T-cell (primary cell): ENCODE measurements at regions of chr11 and their contacts with region 1.

Region 1: GRCh38 chr11:57493507-57494503 is 21.7 kb downstream of the SLC43A1 start:
- DNase-seq: peak; percentile 34 to 80 (median 64)
- ATAC-seq: peak; percentile 89 to 92 (median 91)
- H3K4me3 ChIP-seq: no peak overlapping the region
- H3K4me3 Mint-ChIP-seq: no peak overlapping the region
- H3K27ac ChIP-seq: no peak overlapping the region
- H3K27ac Mint-ChIP-seq: peak overlapping the region; percentile 19 to 39
- H3K4me1 ChIP-seq: peaks cover 0 to 3% of the 10 kb centered on the region in 2 experiments
- H3K4me1 Mint-ChIP-seq: peaks cover 0 to 3% (median 0%) of the 10 kb centered on the region in 3 donors
- H3K27me3 ChIP-seq: peaks cover 0 to 7% of the 10 kb centered on the region in 2 experiments
- H3K27me3 Mint-ChIP-seq: no peaks in the 10 kb centered on the region

Region 2: GRCh38 chr11:57482782-57483561 is 10.8 kb before region 1 on chr11:
- CTCF ChIA-PET with region 1: interaction called, 14 read pairs
- POLR2A ChIA-PET with region 1: interaction called in 1 of 2 experiments, 3 read pairs
- DNase-seq: peak in 33 of 35 experiments; percentile 23 to 78 (median 53)
- ATAC-seq: peak; percentile 64 to 92 (median 74)
- H3K4me3 ChIP-seq: peak overlapping the region; percentile 21 to 39
- H3K4me3 Mint-ChIP-seq: peak overlapping the region in 2 of 3 donors; percentile 28 to 47
- H3K27ac ChIP-seq: no peak overlapping the region
- H3K27ac Mint-ChIP-seq: no peak overlapping the region
- H3K4me1 ChIP-seq: peaks cover 2 to 20% of the 10 kb centered on the region in 2 experiments
- H3K4me1 Mint-ChIP-seq: peaks cover 5 to 17% (median 12%) of the 10 kb centered on the region in 3 donors
- H3K27me3 ChIP-seq: peaks cover 0 to 45% of the 10 kb centered on the region in 2 experiments
- H3K27me3 Mint-ChIP-seq: peaks cover 12 to 30% of the 10 kb centered on the region in 2 donors

Region 3: GRCh38 chr11:57508341-57509170 is 14.8 kb after region 1 on chr11:
- CTCF ChIA-PET with region 1: interaction called, 17 to 27 read pairs
- POLR2A ChIA-PET with region 1: no interaction called
- DNase-seq: no peak
- ATAC-seq: no peak
- H3K4me3 ChIP-seq: no peak overlapping the region
- H3K4me3 Mint-ChIP-seq: no peak overlapping the region
- H3K27ac ChIP-seq: no peak overlapping the region
- H3K27ac Mint-ChIP-seq: no peak overlapping the region
- H3K4me1 ChIP-seq: peaks cover 0 to 6% of the 10 kb centered on the region in 2 experiments
- H3K4me1 Mint-ChIP-seq: peaks cover 18 to 27% (median 25%) of the 10 kb centered on the region in 3 donors
- H3K27me3 ChIP-seq: no peaks in the 10 kb centered on the region
- H3K27me3 Mint-ChIP-seq: no peaks in the 10 kb centered on the region

Region 4: DNA sequence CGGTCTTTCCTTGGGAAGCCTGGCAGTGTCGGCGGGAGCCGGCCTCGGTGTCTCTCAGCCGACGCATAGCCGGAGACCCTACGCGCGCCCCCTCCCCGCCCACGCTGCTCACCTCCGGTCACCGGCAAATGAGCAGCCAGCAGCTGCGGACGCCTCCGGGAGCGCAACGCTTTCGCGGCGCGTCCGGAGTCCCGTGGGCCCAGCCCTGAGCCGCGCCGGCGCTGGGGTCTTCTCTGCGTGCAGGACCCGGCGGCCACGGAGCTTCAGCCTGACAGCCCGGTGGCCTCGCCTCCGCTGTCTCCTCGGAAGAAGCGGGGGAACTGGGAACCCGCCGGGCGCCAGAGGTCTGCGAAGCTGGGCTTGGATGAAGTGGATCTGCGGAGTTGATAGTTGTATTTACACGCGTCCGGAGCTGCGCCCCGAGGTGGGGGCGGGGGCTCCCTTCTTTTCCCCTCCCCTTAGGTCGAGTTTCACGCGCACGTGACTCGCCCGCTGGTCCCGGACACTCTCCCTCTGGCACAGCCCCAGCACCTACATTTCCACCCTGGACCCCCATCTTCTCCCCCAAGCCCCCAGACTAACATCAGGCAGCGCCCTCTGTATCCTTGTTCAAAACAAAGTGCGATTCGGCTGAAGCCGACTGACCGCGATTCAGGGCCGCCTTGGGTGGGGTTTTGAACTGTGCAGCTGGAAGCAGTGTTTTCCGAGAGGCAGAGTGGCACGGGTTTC is 21.7 kb after region 1 on chr11 and contains the start of gene SLC43A1:
- CTCF ChIA-PET with region 1: interaction called, 8 to 17 read pairs
- POLR2A ChIA-PET with region 1: no interaction called
- DNase-seq: peak in 5 of 35 experiments; percentile 4 to 17 (median 11)
- ATAC-seq: peak; percentile 34 to 47 (median 38)
- H3K4me3 ChIP-seq: peak within 1 kb of the TSS; percentile 85 to 94
- H3K4me3 Mint-ChIP-seq: peak within 1 kb of the TSS; percentile 96 to 98 (median 98)
- H3K27ac ChIP-seq: peak within 1 kb of the TSS; percentile 56
- H3K27ac Mint-ChIP-seq: peak within 1 kb of the TSS; percentile 81 to 86
- H3K4me1 ChIP-seq: peaks cover 3 to 25% of the 10 kb centered on the region in 2 experiments
- H3K4me1 Mint-ChIP-seq: peaks cover 28 to 32% (median 31%) of the 10 kb centered on the region in 3 donors
- H3K27me3 ChIP-seq: no peaks in the 10 kb centered on the region
- H3K27me3 Mint-ChIP-seq: no peaks in the 10 kb centered on the region
- total RNA-seq, gene SLC43A1: 8.8 to 31.6 (median 25.1) TPM

Region 5: GRCh38 chr11:57530596-57531507 is 37.0 kb after region 1 on chr11 and contains the start of gene TIMM10:
- CTCF ChIA-PET with region 1: interaction called, 123 to 126 read pairs
- POLR2A ChIA-PET with region 1: interaction called in 1 of 2 experiments, 11 read pairs
- DNase-seq: peak; percentile 81 to 97 (median 91)
- ATAC-seq: peak; percentile 94 to 95 (median 94)
- H3K4me3 ChIP-seq: peak within 1 kb of the TSS; percentile 75 to 84
- H3K4me3 Mint-ChIP-seq: peak within 1 kb of the TSS; percentile 89 to 97 (median 91)
- H3K27ac ChIP-seq: peak within 1 kb of the TSS; percentile 83
- H3K27ac Mint-ChIP-seq: peak within 1 kb of the TSS; percentile 96
- H3K4me1 ChIP-seq: peaks cover 10 to 20% of the 10 kb centered on the region in 2 experiments
- H3K4me1 Mint-ChIP-seq: peaks cover 32 to 38% (median 37%) of the 10 kb centered on the region in 3 donors
- H3K27me3 ChIP-seq: no peaks in the 10 kb centered on the region
- H3K27me3 Mint-ChIP-seq: no peaks in the 10 kb centered on the region
- total RNA-seq, gene TIMM10: 20.7 to 33.2 (median 26.2) TPM